ENCODE measurements at regions of chr11 and their contacts with region 1.

Region 1: GRCh38 chr11:128367573-128367972 is 219.8 kb downstream of the ETS1 start:
- DNase-seq: peak; percentile 62
- ATAC-seq: peak; percentile 79
- H3K4me3 Mint-ChIP-seq: no peak overlapping the region
- H3K27ac Mint-ChIP-seq: peak overlapping the region; percentile 38
- H3K4me1 Mint-ChIP-seq: peaks cover 20% of the 10 kb centered on the region
- H3K27me3 Mint-ChIP-seq: no peaks in the 10 kb centered on the region

Region 2: GRCh38 chr11:128349650-128350299 is 17.8 kb before region 1 on chr11:
- CTCF ChIA-PET with region 1: interaction called, 7 read pairs
- POLR2A ChIA-PET with region 1: interaction called, 3 read pairs
- intact Hi-C with region 1: loop called in 1 of 2 experiments (anchors 2 kb)
- DNase-seq: no peak
- ATAC-seq: no peak
- H3K4me3 Mint-ChIP-seq: peak overlapping the region; percentile 4
- H3K27ac Mint-ChIP-seq: peak overlapping the region; percentile 66
- H3K4me1 Mint-ChIP-seq: peaks cover 80% of the 10 kb centered on the region
- H3K27me3 Mint-ChIP-seq: no peaks in the 10 kb centered on the region

Measured in activated CD4-positive, alpha-beta T cell treated with anti-CD3 and anti-CD28 coated beads for 36 hours (primary cell).